ENCODE measurements at regions of chr22 and their contacts with region 1.

Region 1: DNA sequence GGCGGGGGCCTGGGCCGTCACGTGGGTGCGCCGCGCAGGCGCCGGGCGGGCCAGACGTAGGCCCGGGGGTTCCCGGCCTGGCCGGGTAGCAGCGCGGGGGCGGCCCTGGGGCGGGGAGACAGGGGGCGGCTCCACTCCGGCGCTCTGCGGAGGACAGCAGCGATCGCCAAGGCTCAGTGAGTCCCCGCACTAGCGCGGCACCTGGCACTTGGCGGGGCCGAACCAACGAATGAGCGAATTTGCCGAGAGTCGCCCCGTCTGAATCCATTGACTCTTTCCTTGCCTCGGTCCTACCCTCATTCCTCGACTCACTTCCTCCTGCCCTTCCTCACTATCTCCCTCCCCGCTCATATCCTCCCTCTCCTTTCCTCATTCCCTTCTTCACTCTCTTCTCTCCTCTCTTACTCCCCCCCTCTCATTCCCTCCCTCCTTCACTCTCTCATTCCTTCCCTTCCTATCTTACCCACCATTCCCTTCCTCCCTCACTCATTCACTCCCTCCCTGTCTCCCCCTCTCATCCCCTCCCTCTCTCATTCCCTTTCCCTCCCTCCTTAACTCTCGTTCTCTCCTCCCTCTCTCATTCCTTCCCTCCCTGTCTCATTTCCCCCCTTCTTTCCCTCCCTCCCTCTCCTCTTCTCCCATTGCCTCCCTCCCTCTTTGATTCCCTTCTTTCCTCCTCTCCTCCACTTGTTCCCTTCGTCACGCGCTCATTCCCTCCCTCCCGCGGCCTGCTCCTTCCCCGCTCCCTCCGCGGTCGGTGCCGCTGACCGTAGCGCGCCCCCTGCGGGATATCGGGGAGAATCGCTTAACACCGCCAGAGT is 476 bp upstream of the KLHL22 start:
- DNase-seq: peak; percentile 100
- ATAC-seq: peak; percentile 97
- H3K4me3 ChIP-seq: peak overlapping the region; percentile 46
- H3K27ac ChIP-seq: peak overlapping the region; percentile 81
- H3K4me1 ChIP-seq: peaks cover 15 to 40% of the 10 kb centered on the region in 2 experiments
- H3K27me3 ChIP-seq: no peaks in the 10 kb centered on the region; a peak in 1 of 5 replicates
- CTCF ChIP-seq: peak; percentile 99 to 100 (median 99)
- EP300 ChIP-seq: peak; percentile 77
- POLR2A ChIP-seq: no peak
- RAD21 ChIP-seq: peak; percentile 92 to 98

Region 2: DNA sequence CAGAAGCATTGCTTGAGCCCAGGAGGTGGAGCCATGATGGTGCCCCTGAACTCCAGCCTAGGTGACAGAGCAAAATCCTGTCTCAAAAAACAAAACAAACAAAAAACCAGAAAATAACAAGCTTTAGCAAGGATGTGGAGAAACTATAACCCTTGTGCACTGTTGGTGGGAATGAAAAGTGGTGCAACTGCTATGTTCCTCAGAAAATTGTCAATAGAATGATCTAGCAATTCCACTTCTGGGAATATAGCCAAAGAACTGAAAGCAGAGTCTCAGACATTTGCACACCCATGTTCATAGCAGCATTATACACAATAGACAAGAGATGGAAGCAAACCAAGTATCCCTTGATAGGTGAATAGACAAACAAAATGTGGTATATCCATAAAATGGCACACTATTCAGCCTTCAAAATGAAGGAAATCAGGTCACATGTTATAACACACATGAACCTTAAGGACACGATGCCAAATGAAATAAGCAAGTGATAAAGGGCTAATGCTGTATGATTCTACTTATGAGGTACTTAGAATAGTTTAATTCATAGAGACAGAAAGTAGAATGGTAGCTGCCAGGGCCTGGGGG is 16.4 kb before region 1 on chr22:
- CTCF ChIA-PET with region 1: interaction called, 3 read pairs
- POLR2A ChIA-PET with region 1: interaction called, 74 read pairs
- in situ Hi-C with region 1: no loop called
- intact Hi-C with region 1: loop called (anchors 2 kb)
- DNase-seq: no peak
- ATAC-seq: 0 out of 3 replicates have a peak, but pooled peaks have one; percentile 15
- H3K4me3 ChIP-seq: no peak overlapping the region
- H3K27ac ChIP-seq: no peak overlapping the region
- H3K4me1 ChIP-seq: peaks cover 5 to 6% of the 10 kb centered on the region in 2 experiments; a peak in 4 of 5 replicates
- H3K27me3 ChIP-seq: no peaks in the 10 kb centered on the region
- CTCF ChIP-seq: no peak
- EP300 ChIP-seq: no peak
- POLR2A ChIP-seq: no peak
- RAD21 ChIP-seq: no peak

Region 3: GRCh38 chr22:20523086-20523983 is 27.3 kb after region 1 on chr22:
- CTCF ChIA-PET with region 1: interaction called, 5 read pairs
- POLR2A ChIA-PET with region 1: interaction called, 1,693 read pairs
- in situ Hi-C with region 1: no loop called
- intact Hi-C with region 1: loop called (anchors 1 kb)
- DNase-seq: peak; percentile 76 to 92 (median 80)
- ATAC-seq: peak; percentile 78
- H3K4me3 ChIP-seq: no peak overlapping the region
- H3K27ac ChIP-seq: peak overlapping the region; percentile 43
- H3K4me1 ChIP-seq: peaks cover 43 to 49% of the 10 kb centered on the region in 2 experiments
- H3K27me3 ChIP-seq: no peaks in the 10 kb centered on the region
- CTCF ChIP-seq: no peak; a peak in 1 of 6 replicates
- EP300 ChIP-seq: peak; percentile 95
- POLR2A ChIP-seq: no peak
- RAD21 ChIP-seq: peak in 1 of 2 experiments; percentile 39; a peak in 1 of 4 replicates